ENCODE measurements at regions of chr17 and their contacts with region 1.

Region 1: DNA sequence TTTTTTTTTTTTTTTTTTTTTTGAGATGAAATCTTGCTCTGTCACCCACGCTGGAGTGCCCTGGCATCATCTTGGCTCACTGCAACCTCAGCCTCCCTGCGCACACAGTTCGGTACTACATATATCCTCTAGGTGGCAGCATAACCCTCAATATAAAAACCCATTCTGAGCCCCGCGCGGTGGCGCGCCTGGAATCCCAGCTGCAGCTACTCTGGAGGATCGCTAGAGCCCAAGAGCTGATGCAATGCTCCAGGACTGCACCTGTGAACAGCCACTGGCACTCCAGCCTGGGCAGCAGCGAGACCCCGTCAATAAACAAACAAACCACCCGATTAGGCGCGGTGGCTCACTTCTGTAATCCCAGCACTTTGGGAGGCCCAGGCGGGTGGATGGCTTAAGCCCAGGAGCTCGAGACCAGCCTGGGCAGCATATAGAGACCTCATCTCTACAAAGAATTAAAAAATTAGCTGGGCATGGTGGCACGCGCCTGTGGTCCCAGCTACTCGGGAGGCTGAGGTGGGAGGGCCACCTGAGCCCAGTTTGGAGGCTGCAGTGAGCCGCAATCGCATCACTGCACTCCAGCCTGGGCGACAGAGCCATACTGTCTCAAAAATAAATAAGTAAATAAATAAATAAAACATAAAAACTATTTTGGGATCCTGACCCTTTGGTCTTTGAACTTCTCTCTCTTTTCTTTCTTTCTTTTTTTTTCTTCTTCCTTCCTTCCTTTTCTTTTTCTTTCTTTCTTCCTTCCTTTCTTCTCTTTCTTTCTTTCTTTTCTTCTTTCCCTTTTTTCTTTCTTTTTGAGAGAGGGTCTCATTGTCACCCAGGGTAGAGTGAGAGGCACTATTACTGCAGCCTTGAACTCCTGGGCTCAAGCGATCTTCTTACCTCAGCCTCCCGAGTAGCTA is 15.4 kb upstream of the AKAP10 start:
- DNase-seq: peak; percentile 35
- H3K4me3 ChIP-seq: no peak overlapping the region
- H3K27me3 ChIP-seq: peaks cover 4% of the 10 kb centered on the region; the same call in 1 of the 2 replicates
- CTCF ChIP-seq: peak; percentile 68

Region 2: GRCh38 chr17:19948113-19948943 is 44.7 kb before region 1 on chr17:
- CTCF ChIA-PET with region 1: no interaction called
- POLR2A ChIA-PET with region 1: no interaction called
- DNase-seq: no peak
- H3K4me3 ChIP-seq: no peak overlapping the region
- H3K27me3 ChIP-seq: no peaks in the 10 kb centered on the region
- CTCF ChIP-seq: no peak

Region 3: DNA sequence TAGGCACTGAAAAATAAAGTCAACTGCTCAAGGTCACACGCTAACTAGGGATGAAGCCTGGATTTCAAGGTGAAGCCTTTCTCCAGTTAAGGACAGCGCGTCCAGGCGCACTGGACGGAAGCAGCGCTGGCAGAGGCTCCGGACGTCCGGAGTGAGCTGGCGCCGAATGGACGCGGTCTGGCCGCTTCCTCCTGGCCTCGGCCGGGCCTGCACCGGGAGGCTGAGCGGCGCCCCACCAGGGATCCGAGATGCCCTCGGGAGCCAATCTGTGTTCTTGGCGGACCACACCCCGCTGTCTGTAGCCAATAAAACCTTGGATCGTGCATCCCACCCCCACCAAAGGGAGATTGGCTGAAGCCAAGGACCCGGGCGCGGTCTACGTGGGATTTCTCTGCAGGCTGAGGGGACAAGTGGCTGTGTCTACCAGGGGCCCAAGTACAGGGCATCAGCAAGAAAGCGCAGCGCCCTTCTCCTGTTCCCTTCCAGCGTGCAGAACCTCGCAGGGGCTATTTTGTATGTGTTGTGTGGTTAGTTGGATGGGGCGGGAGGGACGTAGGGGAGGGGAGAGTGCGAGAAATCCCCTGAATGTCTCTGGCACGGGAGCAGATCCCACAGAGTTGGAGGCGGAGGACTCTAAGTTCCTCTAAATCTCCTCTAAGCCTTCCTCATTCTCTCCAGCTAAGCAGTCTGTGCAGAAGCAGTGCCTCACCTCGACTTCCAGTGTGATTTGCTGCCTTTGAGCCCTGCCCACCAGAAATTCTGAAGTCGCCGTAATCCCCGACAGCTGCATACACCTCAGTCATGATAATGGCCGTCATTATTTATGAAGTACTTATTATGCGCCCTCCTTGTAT is 12.9 kb before region 1 on chr17:
- CTCF ChIA-PET with region 1: interaction called, 18 read pairs
- POLR2A ChIA-PET with region 1: no interaction called
- DNase-seq: no peak
- H3K4me3 ChIP-seq: no peak overlapping the region
- H3K27me3 ChIP-seq: no peaks in the 10 kb centered on the region
- CTCF ChIP-seq: no peak

Region 4: GRCh38 chr17:20009302-20010098 is 16.4 kb after region 1 on chr17 and contains the start of gene SPECC1:
- CTCF ChIA-PET with region 1: interaction called, 61 read pairs
- POLR2A ChIA-PET with region 1: interaction called, 4 read pairs
- DNase-seq: no peak
- H3K4me3 ChIP-seq: peak within 1 kb of the TSS; percentile 63
- H3K27me3 ChIP-seq: peaks cover 11% of the 10 kb centered on the region
- CTCF ChIP-seq: no peak
- polyA plus RNA-seq, gene SPECC1: 13.0 and 16.9 TPM in 2 replicates

Region 5: DNA sequence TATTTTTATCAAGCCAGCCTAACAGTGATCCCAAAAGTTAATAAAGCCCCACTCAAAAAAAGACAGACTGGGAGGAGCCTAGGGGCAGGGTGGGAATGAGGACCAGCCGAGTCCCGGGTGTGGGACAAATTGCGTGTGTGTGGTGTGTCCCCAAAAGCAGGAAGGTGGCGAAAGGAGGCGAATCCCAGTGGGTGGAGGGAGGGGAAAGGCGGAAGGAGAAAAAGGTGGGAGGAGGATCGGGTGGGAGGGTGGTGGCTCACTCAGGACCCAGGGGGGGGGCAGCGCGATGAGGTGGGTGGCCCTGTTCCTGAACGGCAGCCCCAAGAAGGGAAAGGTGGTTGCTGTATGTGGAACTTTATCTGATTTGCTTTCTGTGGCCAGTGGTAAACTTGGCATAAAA is 118.5 kb after region 1 on chr17:
- CTCF ChIA-PET with region 1: interaction called, 47 read pairs
- POLR2A ChIA-PET with region 1: no interaction called
- DNase-seq: no peak
- H3K4me3 ChIP-seq: no peak overlapping the region
- H3K27me3 ChIP-seq: no peaks in the 10 kb centered on the region; the same call in none of the 2 replicates
- CTCF ChIP-seq: no peak

Measured in BJ (cell line).